Lower leg skin (tissue), 4 donors: ENCODE measurements at regions of chr10 and their contacts with region 1.

Region 1: DNA sequence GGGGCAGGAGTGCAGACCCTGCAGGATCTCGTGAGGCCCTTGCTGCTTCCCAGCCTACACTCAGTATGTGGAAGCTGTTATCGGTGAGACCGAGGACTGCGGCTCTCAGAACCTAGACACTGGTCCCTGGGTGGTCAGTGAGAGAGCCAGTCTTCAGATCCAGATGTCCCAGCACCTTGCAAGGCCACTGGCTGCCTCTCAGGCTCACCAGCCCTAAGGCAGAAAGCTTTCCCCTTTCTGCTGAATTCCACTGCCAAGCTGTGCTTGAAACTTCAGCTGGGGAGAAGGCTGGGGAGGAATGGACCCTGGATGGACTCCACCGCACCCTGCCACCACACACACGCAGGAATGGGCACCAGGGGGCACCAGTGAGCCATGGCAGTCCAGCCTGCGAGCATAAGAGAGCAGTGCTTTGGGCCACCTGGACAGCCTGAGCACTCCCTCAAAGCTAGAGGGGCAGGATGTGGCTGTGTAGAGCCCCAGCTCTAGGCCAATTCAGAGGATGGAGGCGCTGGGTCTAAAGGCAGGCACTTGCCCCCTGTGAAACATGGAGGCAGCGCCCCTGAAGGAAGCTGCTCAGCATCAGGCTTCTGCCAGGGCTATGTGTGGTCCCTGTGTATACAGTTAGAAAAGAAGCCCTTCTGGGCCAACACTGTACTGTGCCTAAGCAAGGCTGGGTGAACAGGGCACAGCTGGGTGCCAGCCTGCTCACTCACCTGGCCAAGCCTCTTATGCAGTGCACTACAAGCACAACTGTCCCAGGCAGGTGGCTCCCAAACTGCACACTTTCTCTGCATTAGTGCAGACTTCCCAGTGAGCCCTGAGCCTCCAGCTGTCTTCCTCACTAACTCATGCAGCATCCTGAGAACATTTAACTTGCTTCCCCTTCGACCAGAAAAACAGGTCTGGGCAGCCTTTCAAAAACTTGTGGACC is 21.6 kb downstream of the TMEM72 start:
- DNase-seq: peak; percentile 84 to 97
- H3K4me3 ChIP-seq: no peak overlapping the region
- CTCF ChIP-seq: peak in 1 of 3 donors; percentile 96
- POLR2A ChIP-seq: no peak

Region 2: DNA sequence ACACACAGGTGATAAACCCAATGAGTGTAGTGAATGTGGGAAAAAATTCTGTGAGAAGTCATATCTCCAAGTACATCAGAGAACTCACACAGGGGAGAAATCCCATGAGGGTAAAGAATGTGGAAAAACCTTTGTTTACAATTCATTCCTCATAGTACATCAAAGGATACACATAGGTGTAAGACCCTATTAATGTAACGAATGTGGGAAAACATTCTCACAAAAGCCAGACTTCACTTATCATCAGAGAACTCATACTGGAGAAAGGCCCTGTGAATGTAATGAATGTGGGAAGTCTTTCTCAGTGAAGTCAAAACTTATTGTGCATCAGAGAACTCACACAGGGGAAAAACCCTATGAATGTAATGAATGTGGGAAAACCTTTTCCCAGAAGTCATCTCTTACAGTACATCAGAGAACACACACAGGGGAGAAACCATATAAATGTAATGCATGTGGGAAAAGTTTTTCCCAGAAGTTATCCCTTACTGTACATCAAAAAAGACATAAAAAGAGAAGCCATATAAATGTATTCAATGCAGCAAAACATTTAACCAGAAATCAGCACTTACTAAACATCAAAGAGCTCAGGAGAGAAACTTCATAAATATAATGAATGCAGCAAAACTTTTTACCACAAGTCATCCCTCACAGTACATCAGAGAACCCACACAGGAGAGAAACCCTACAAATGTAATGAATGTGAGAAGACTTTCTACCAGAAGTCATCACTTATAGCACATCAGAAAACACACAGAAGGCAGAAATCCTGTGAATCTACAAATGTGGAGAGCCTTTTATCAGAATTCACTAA is 1408.1 kb before region 1 on chr10:
- intact Hi-C with region 1: no loop called
- DNase-seq: no peak
- H3K4me3 ChIP-seq: no peak overlapping the region
- CTCF ChIP-seq: no peak
- POLR2A ChIP-seq: no peak

Region 3: DNA sequence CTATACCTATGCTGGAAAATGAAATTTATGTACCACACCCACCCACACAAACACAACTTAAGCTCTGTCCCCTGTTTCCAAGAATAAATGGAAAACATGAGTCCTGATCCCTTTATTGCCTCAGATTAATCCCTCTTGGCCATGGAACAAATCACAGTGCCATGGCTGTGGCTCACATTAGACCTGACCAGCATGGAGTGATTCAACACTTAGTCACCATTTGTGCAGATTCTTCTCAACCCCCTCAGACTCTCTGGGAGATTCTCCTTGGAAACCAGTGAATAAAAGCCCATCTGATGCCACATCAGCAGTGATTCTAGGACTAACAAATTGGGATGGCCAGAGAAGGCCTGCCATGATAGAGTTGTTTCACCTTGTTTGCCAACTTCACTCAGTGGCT is 226.0 kb before region 1 on chr10:
- intact Hi-C with region 1: no loop called
- DNase-seq: no peak
- H3K4me3 ChIP-seq: no peak overlapping the region
- CTCF ChIP-seq: no peak
- POLR2A ChIP-seq: no peak

Region 4: GRCh38 chr10:44974628-44975431 is 42.0 kb after region 1 on chr10:
- intact Hi-C with region 1: loop called (anchors 5 kb)
- DNase-seq: peak in 1 of 2 donors; percentile 94
- H3K4me3 ChIP-seq: no peak overlapping the region
- CTCF ChIP-seq: peak in 2 of 3 donors; percentile 72 to 79
- POLR2A ChIP-seq: no peak